ENCODE measurements at regions of chr6 and their contacts with region 1.

Region 1: DNA sequence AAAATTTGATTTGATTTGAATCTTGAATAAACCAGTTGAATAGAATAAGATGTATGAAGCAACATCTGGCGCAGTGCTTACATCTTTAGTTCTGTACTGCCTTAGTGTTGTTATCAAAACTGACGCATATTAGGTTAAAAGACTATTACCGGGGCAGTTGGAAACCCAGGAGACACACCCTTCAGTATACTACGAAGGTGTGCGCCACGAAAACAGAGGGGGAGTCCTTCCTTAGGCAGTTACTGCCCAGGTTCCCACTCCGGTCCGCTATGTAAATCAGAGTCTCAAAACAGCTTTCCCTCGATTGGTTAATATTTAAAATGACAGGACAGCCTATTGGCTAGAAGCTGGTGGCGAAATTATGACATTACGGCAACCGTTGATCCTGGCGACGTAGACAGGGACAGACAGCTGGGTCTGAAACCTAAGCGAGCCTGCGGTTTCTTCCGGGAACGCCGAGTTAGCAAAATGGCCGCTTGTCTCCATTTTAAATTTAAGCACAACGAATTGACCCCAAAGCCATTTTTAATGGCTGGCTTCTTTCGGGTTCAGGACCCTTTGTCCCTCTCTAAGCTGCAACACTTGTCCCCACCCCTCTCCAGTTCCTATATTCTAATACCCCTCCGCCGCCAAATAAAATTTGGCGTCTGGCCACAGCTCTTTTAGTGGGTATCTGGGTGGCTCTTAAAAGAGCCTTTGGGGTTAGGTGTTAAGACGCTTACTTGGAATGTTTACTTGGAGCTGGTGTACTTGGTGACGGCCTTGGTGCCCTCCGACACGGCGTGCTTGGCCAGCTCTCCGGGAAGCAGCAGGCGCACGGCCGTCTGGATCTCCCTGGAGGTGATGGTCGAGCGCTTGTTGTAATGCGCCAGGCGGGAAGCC is 35.8 kb downstream of the HFE start:
- DNase-seq: peak; percentile 76
- H3K4me3 ChIP-seq: peak overlapping the region; percentile 84 to 94
- H3K27ac ChIP-seq: peak overlapping the region; percentile 92 to 100
- H3K4me1 ChIP-seq: peaks cover 7% of the 10 kb centered on the region in 2 experiments; a peak in 3 of 4 replicates
- H3K27me3 ChIP-seq: no peaks in the 10 kb centered on the region
- CTCF ChIP-seq: no peak
- EP300 ChIP-seq: peak; percentile 93 to 98
- RAD21 ChIP-seq: no peak

Region 2: DNA sequence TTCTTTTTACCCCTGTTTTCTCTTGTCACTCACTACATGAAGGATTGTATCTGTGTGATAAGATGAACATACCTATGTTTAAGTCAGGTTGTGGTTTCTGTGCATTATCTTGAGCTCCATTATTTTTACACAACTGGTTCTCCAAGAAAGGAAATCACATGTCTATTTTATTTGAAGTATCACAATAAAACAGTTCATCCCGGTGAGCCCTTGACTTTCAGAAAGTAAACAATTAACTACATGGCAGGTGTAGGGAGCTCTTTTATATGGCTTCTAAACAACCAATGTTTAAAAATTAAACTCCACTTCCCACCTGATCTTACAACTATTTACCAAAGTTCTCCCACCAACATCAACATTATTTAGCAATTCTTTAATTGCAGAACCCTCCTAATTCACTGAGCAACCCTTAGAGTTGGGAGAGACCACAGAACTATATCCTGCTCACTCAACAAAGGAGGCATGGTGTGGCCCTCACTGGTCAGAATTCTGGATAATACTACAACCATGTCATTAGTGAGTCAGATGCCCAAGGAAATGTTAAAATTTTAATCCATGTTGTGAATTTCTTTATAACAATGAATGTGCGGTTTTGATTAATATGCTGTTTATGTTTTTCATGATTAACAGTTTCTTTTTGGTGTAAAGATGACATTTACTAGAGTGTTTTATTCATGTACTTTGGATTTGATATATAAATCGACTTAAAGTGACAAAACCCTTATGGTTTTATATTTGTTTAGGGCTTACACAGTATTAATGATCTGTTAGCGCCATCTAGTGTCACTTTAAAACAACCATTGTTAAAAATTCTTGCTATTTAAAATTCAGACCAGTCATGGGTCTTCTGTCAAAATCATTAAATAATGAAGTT is 521.0 kb before region 1 on chr6:
- CTCF ChIA-PET with region 1: no interaction called
- POLR2A ChIA-PET with region 1: no interaction called
- DNase-seq: peak; percentile 49
- H3K4me3 ChIP-seq: no peak overlapping the region; a peak in 1 of 4 replicates
- H3K27ac ChIP-seq: no peak overlapping the region
- H3K4me1 ChIP-seq: no peaks in the 10 kb centered on the region; a peak in 1 of 4 replicates
- H3K27me3 ChIP-seq: no peaks in the 10 kb centered on the region
- CTCF ChIP-seq: peak; percentile 80
- EP300 ChIP-seq: no peak
- RAD21 ChIP-seq: peak; percentile 85

Region 3: GRCh38 chr6:26031595-26032339 is 91.3 kb before region 1 on chr6:
- CTCF ChIA-PET with region 1: no interaction called
- POLR2A ChIA-PET with region 1: interaction called, 38 read pairs
- DNase-seq: peak; percentile 89
- H3K4me3 ChIP-seq: peak overlapping the region; percentile 73 to 84
- H3K27ac ChIP-seq: peak overlapping the region; percentile 92 to 99
- H3K4me1 ChIP-seq: peaks cover 10 to 23% of the 10 kb centered on the region in 2 experiments; a peak in 3 of 4 replicates
- H3K27me3 ChIP-seq: no peaks in the 10 kb centered on the region
- CTCF ChIP-seq: peak; percentile 30
- EP300 ChIP-seq: peak; percentile 52 to 61; a peak in 2 of 4 replicates
- RAD21 ChIP-seq: no peak

Region 4: GRCh38 chr6:26097268-26097875 is 25.7 kb before region 1 on chr6:
- CTCF ChIA-PET with region 1: interaction called, 11 read pairs
- POLR2A ChIA-PET with region 1: no interaction called
- DNase-seq: peak; percentile 65
- H3K4me3 ChIP-seq: no peak overlapping the region
- H3K27ac ChIP-seq: no peak overlapping the region
- H3K4me1 ChIP-seq: peaks cover 0 to under 1% of the 10 kb centered on the region in 2 experiments; a peak in 2 of 4 replicates
- H3K27me3 ChIP-seq: no peaks in the 10 kb centered on the region
- CTCF ChIP-seq: peak; percentile 85
- EP300 ChIP-seq: no peak
- RAD21 ChIP-seq: peak; percentile 84

Region 5: GRCh38 chr6:26141378-26141904 is 18.4 kb after region 1 on chr6:
- CTCF ChIA-PET with region 1: interaction called, 4 read pairs
- POLR2A ChIA-PET with region 1: interaction called, 19 read pairs
- DNase-seq: no peak
- H3K4me3 ChIP-seq: no peak overlapping the region
- H3K27ac ChIP-seq: peak overlapping the region in 1 of 2 experiments; percentile 44; a peak in 1 of 4 replicates
- H3K4me1 ChIP-seq: peaks cover 0 to 13% of the 10 kb centered on the region in 2 experiments; a peak in 2 of 4 replicates
- H3K27me3 ChIP-seq: no peaks in the 10 kb centered on the region
- CTCF ChIP-seq: no peak
- EP300 ChIP-seq: no peak
- RAD21 ChIP-seq: no peak

Region 6: DNA sequence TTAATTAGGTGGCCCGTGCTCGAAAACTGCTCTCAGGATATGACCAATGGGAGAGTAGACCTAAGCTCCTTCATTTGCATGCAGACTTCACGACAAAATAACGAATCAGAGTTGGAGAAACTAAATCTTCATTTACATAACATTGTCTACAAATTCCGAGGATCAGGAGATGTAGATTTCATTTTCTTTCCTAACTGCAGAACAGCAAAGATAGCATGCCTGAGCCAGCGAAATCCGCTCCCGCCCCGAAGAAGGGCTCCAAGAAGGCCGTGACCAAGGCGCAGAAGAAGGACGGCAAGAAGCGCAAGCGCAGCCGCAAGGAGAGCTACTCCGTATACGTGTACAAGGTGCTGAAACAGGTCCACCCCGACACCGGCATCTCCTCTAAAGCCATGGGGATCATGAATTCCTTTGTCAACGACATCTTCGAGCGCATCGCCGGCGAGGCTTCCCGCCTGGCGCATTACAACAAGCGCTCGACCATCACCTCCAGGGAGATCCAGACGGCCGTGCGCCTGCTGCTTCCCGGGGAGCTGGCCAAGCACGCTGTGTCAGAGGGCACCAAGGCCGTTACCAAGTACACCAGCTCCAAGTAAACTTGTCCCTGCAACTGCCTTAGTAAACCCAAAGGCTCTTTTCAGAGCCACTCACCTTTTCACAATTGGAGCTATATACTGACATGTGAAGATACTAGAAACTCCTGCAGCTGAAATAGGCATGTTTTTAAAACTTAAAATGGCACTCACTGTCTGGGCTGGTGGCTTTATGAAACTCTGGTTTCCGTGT is 60.7 kb after region 1 on chr6:
- CTCF ChIA-PET with region 1: interaction called, 4 read pairs
- POLR2A ChIA-PET with region 1: interaction called, 95 read pairs
- DNase-seq: peak; percentile 71
- H3K4me3 ChIP-seq: peak overlapping the region; percentile 49 to 56
- H3K27ac ChIP-seq: peak overlapping the region; percentile 62 to 97
- H3K4me1 ChIP-seq: peaks cover 4 to 6% of the 10 kb centered on the region in 2 experiments; a peak in 2 of 4 replicates
- H3K27me3 ChIP-seq: no peaks in the 10 kb centered on the region
- CTCF ChIP-seq: no peak
- EP300 ChIP-seq: peak in 1 of 2 experiments; percentile 39; a peak in 1 of 4 replicates
- RAD21 ChIP-seq: no peak

Region 7: GRCh38 chr6:26234421-26235296 is 111.6 kb after region 1 on chr6:
- CTCF ChIA-PET with region 1: no interaction called
- POLR2A ChIA-PET with region 1: interaction called, 13 read pairs
- DNase-seq: peak; percentile 73
- H3K4me3 ChIP-seq: peak overlapping the region; percentile 61 to 72
- H3K27ac ChIP-seq: peak overlapping the region; percentile 77 to 85
- H3K4me1 ChIP-seq: peaks cover 0 to 3% of the 10 kb centered on the region in 2 experiments; a peak in 3 of 4 replicates
- H3K27me3 ChIP-seq: no peaks in the 10 kb centered on the region
- CTCF ChIP-seq: no peak
- EP300 ChIP-seq: peak in 1 of 2 experiments; percentile 52; a peak in 1 of 4 replicates
- RAD21 ChIP-seq: no peak